ENCODE measurements at regions of chr1 and their contacts with region 1.

Region 1: DNA sequence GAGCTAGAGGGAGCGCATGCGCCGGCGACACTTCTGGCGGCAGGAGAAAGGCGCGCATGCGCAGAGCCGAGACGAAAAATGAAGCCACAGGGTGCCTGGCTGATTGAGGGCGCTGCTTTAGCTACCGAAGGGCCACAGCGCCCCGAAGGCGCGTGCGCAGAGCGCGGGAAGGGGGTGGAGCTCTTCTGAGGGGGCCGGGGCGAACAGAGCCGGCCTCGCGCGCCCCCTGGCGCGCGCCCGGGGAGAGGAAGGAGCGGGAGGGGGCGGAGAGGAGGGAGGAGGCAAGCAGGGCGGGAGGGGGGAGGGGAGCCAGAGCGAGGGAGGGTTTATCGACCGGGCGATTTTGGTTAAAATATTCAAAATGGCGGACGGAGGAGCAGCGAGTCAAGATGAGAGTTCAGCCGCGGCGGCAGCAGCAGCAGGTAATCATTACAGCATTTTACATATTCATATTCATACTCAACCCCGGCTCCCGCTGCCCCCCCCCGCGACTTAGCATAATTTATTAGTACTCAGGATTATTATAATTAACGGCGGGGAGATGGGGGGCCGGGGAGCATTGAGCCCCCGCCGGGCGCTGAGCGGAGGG is at the start of gene POU2F1:
- DNase-seq: peak; percentile 98 to 100 (median 99)
- ATAC-seq: peak; percentile 80
- H3K4me3 ChIP-seq: peak within 1 kb of the TSS; percentile 94
- H3K4me3 Mint-ChIP-seq: peak within 1 kb of the TSS; percentile 99
- H3K27ac ChIP-seq: peak within 1 kb of the TSS; percentile 87 to 98
- H3K27ac Mint-ChIP-seq: peak within 1 kb of the TSS; percentile 94
- H3K4me1 ChIP-seq: peaks cover 16% of the 10 kb centered on the region
- H3K4me1 Mint-ChIP-seq: peaks cover 40% of the 10 kb centered on the region
- H3K27me3 ChIP-seq: no peaks in the 10 kb centered on the region
- H3K27me3 Mint-ChIP-seq: no peaks in the 10 kb centered on the region
- CTCF ChIP-seq: peak; percentile 53
- total RNA-seq, gene POU2F1: 27.0 to 28.6 TPM

Region 2: DNA sequence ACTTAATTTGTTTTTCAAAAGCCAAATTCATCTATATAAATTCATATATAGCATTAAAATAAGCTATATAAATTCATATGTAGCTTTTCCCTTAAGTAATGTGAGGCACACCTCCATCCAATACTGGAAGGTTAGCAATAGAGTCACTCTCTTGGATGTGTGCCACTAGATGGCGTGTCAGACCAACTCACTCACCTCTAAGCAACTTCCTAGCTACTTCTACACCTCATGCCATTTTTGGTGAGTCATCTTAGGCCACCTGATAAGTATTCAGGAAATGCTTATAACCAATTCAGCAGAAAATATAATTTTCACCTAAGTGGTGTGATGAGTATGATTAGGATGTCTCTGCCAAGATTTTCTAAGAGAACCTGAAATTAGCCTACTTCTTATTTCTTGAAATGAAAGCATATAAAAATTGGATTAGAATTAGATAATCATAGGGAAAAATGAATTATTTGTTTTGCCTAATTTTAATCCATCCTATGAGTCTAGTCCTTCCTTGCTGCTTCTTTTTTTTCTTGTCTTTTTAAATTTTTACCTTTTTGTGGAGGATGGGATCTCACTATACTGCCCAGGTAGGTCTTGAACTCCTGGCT is 310.1 kb before region 1 on chr1:
- CTCF ChIA-PET with region 1: interaction called, 20 read pairs
- POLR2A ChIA-PET with region 1: interaction called, 10 read pairs
- intact Hi-C with region 1: loop called in 1 of 2 experiments (anchors 10 kb)
- DNase-seq: peak; percentile 54 to 92 (median 68)
- ATAC-seq: peak; percentile 100
- H3K4me3 ChIP-seq: no peak overlapping the region
- H3K4me3 Mint-ChIP-seq: no peak overlapping the region
- H3K27ac ChIP-seq: no peak overlapping the region
- H3K27ac Mint-ChIP-seq: no peak overlapping the region
- H3K4me1 ChIP-seq: peaks cover 3% of the 10 kb centered on the region
- H3K4me1 Mint-ChIP-seq: no peaks in the 10 kb centered on the region
- H3K27me3 ChIP-seq: no peaks in the 10 kb centered on the region
- H3K27me3 Mint-ChIP-seq: no peaks in the 10 kb centered on the region
- CTCF ChIP-seq: peak; percentile 81

Region 3: DNA sequence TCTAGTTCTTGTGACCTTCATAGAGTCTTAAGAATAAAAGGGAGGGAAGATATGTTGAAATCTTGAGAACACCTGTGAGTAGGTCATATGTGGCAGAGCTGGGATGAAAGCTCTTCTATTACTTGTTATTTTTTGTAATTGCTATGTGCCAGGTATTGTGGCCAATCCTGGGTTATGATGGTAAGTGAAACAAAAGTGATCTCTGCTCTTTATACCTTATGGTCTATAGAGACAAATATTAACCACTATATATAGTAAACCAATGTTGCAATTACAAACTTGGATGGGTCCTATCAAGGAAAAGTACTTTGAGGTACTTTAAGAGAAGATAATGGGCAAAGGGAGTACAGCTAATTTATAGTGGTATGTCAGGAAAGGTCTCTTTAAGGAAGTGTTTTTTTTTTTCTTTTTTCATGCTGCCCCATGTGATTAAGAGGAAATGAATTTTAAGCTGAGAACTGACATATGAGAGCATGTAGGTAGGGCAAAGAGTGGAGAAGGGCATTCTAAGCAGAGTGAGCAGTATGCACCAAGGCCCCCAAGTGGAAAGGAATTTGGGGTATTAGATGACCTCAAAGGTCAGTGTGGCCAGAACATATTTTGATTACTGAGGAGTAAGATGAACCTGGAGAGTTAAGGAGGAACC is 43.3 kb after region 1 on chr1:
- CTCF ChIA-PET with region 1: interaction called, 18 read pairs
- POLR2A ChIA-PET with region 1: interaction called, 70 read pairs
- intact Hi-C with region 1: loop called in 1 of 2 experiments (anchors 5 kb)
- DNase-seq: peak in 4 of 14 experiments; percentile 4 to 29 (median 19)
- ATAC-seq: peak; percentile 57
- H3K4me3 ChIP-seq: no peak overlapping the region
- H3K4me3 Mint-ChIP-seq: no peak overlapping the region
- H3K27ac ChIP-seq: no peak overlapping the region
- H3K27ac Mint-ChIP-seq: no peak overlapping the region
- H3K4me1 ChIP-seq: peaks cover 24% of the 10 kb centered on the region
- H3K4me1 Mint-ChIP-seq: peaks cover 31% of the 10 kb centered on the region
- H3K27me3 ChIP-seq: no peaks in the 10 kb centered on the region
- H3K27me3 Mint-ChIP-seq: no peaks in the 10 kb centered on the region
- CTCF ChIP-seq: no peak

Region 4: GRCh38 chr1:167447521-167448136 is 227.0 kb after region 1 on chr1:
- CTCF ChIA-PET with region 1: interaction called, 7 read pairs
- POLR2A ChIA-PET with region 1: interaction called, 17 read pairs
- intact Hi-C with region 1: loop called in 1 of 2 experiments (anchors 5 kb)
- DNase-seq: peak; percentile 49 to 92 (median 68)
- ATAC-seq: peak; percentile 84
- H3K4me3 ChIP-seq: peak overlapping the region; percentile 37
- H3K4me3 Mint-ChIP-seq: peak overlapping the region; percentile 91
- H3K27ac ChIP-seq: peak overlapping the region; percentile 84 to 89
- H3K27ac Mint-ChIP-seq: peak overlapping the region; percentile 100
- H3K4me1 ChIP-seq: peaks cover 94% of the 10 kb centered on the region
- H3K4me1 Mint-ChIP-seq: peaks cover 85% of the 10 kb centered on the region
- H3K27me3 ChIP-seq: no peaks in the 10 kb centered on the region
- H3K27me3 Mint-ChIP-seq: no peaks in the 10 kb centered on the region
- CTCF ChIP-seq: no peak

Region 5: GRCh38 chr1:167553136-167554027 is 332.8 kb after region 1 on chr1 and contains the start of gene CREG1:
- CTCF ChIA-PET with region 1: no interaction called
- POLR2A ChIA-PET with region 1: interaction called, 29 read pairs
- intact Hi-C with region 1: loop called in 1 of 2 experiments (anchors 5 kb)
- DNase-seq: peak; percentile 76 to 95 (median 86)
- ATAC-seq: peak; percentile 97
- H3K4me3 ChIP-seq: peak within 1 kb of the TSS; percentile 75
- H3K4me3 Mint-ChIP-seq: peak within 1 kb of the TSS; percentile 96
- H3K27ac ChIP-seq: peak within 1 kb of the TSS in 1 of 2 donors; percentile 25
- H3K27ac Mint-ChIP-seq: peak within 1 kb of the TSS; percentile 81
- H3K4me1 ChIP-seq: peaks cover 25% of the 10 kb centered on the region
- H3K4me1 Mint-ChIP-seq: peaks cover 42% of the 10 kb centered on the region
- H3K27me3 ChIP-seq: no peaks in the 10 kb centered on the region
- H3K27me3 Mint-ChIP-seq: no peaks in the 10 kb centered on the region
- CTCF ChIP-seq: no peak
- total RNA-seq, gene CREG1: 10.7 to 11.2 TPM

Region 6: GRCh38 chr1:168178638-168179437 is 958.2 kb after region 1 on chr1 and contains the start of gene TIPRL:
- CTCF ChIA-PET with region 1: no interaction called
- POLR2A ChIA-PET with region 1: no interaction called
- intact Hi-C with region 1: loop called in 1 of 2 experiments (anchors 10 kb)
- DNase-seq: peak; percentile 85 to 97 (median 92)
- ATAC-seq: peak; percentile 89
- H3K4me3 ChIP-seq: peak within 1 kb of the TSS; percentile 89
- H3K4me3 Mint-ChIP-seq: no peak within 1 kb of the TSS
- H3K27ac ChIP-seq: peak within 1 kb of the TSS; percentile 95 to 96
- H3K27ac Mint-ChIP-seq: no peak within 1 kb of the TSS
- H3K4me1 ChIP-seq: peaks cover 22% of the 10 kb centered on the region
- H3K4me1 Mint-ChIP-seq: peaks cover 15% of the 10 kb centered on the region
- H3K27me3 ChIP-seq: no peaks in the 10 kb centered on the region
- H3K27me3 Mint-ChIP-seq: peaks cover 12% of the 10 kb centered on the region
- CTCF ChIP-seq: peak; percentile 63
- total RNA-seq, gene TIPRL: 15.8 to 16.4 TPM

Measured in CD4-positive, alpha-beta T cell (primary cell).